ENCODE measurements at regions of chr6 and their contacts with region 1.

Region 1: DNA sequence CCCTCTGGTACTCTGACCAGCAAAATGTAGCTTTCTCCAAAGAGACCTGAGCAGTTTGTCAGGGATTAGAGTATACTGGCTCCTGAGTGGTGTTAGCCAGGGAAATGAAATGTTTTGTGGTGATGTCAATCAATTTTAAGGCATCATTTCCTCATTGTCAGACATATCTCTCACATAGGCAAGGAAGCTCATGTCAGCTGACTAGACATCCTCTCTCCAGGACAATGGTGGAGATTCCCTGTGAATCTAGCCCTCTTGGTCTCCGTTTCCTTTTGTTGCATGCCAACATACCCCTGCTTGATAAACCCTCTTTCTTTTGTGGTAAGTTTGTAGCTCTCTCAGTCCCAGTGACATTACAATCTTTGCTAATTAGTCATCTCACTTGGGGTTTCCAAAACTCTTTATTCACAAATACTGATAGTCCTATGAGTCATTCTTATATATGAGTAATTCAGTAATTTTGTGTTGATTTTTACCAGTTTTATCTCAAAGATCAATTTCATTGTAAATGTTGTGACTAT is 135.6 kb upstream of the PTPRK start:
- DNase-seq: peak; percentile 56 to 97
- H3K4me3 ChIP-seq: peak overlapping the region; percentile 1; the same call in 1 of the 2 replicates
- H3K27ac ChIP-seq: peak overlapping the region; percentile 89
- H3K4me1 ChIP-seq: peaks cover 43% of the 10 kb centered on the region
- H3K27me3 ChIP-seq: no peaks in the 10 kb centered on the region
- CTCF ChIP-seq: no peak

Region 2: DNA sequence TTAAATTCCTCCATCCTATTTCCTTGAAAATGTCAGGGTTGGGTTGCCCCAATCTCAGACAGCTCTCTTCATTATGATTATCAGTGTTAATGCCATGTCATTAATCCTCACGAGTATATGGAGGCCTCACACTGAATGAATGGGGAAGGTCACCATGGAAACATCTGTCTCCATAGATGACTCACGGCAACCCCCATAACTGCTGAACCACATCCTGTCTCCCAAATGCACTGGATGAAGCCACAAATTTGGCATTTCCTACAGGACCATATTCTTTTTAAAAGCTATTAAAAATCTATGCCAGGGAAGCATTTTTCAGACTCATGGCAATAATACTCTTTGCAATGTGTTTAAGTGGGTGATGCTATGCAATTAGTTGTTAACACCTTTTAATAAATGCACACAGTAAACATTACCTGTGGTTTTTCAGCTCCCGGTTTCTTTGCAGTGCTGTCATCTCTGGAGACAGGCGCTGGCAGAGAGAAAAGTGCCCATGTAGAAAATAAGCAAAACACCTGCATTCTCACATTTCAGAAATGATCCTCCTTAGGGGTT is 55.6 kb before region 1 on chr6:
- CTCF ChIA-PET with region 1: no interaction called
- POLR2A ChIA-PET with region 1: no interaction called
- intact Hi-C with region 1: loop called (anchors 1 kb)
- DNase-seq: peak; percentile 47 to 78
- H3K4me3 ChIP-seq: no peak overlapping the region
- H3K27ac ChIP-seq: peak overlapping the region; percentile 81
- H3K4me1 ChIP-seq: peaks cover 52% of the 10 kb centered on the region
- H3K27me3 ChIP-seq: no peaks in the 10 kb centered on the region
- CTCF ChIP-seq: no peak

Region 3: GRCh38 chr6:128919412-128920180 is 263.6 kb after region 1 on chr6:
- CTCF ChIA-PET with region 1: no interaction called
- POLR2A ChIA-PET with region 1: interaction called, 12 read pairs
- intact Hi-C with region 1: no loop called
- DNase-seq: no peak
- H3K4me3 ChIP-seq: no peak overlapping the region
- H3K27ac ChIP-seq: no peak overlapping the region
- H3K4me1 ChIP-seq: no peaks in the 10 kb centered on the region
- H3K27me3 ChIP-seq: no peaks in the 10 kb centered on the region
- CTCF ChIP-seq: no peak